Panc1 (cell line): ENCODE measurements at regions of chr4 and their contacts with region 1.

Region 1: GRCh38 chr4:24588216-24588954 is 4.0 kb upstream of the DHX15 start:
- DNase-seq: no peak
- ATAC-seq: no peak
- H3K4me3 ChIP-seq: no peak overlapping the region
- H3K27ac ChIP-seq: no peak overlapping the region
- H3K4me1 ChIP-seq: no peaks in the 10 kb centered on the region; the same call in 1 of the 2 replicates
- H3K27me3 ChIP-seq: no peaks in the 10 kb centered on the region
- CTCF ChIP-seq: no peak

Region 2: DNA sequence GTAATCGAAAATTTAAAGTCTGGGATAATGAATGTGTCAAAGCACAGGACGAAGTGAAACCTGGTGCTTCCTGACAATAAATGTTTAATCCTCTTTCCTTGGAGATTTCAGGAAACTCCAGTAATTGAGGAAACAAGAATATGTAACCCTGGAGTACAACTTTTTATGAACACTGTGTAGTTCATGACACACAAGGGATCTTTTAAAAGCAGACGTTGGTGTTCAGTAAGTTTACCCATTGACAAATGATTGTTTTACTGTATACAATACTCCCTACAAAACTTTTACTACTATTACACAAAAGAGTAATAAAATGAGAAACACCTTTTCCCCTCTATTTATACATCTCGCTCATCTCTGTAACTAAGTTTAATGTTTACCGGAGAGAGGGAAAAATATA is 1011.0 kb before region 1 on chr4:
- CTCF ChIA-PET with region 1: no interaction called
- POLR2A ChIA-PET with region 1: no interaction called
- in situ Hi-C with region 1: no loop called
- intact Hi-C with region 1: no loop called
- DNase-seq: no peak
- ATAC-seq: no peak
- H3K4me3 ChIP-seq: no peak overlapping the region
- H3K27ac ChIP-seq: no peak overlapping the region
- H3K4me1 ChIP-seq: no peaks in the 10 kb centered on the region
- H3K27me3 ChIP-seq: no peaks in the 10 kb centered on the region
- CTCF ChIP-seq: no peak

Region 3: DNA sequence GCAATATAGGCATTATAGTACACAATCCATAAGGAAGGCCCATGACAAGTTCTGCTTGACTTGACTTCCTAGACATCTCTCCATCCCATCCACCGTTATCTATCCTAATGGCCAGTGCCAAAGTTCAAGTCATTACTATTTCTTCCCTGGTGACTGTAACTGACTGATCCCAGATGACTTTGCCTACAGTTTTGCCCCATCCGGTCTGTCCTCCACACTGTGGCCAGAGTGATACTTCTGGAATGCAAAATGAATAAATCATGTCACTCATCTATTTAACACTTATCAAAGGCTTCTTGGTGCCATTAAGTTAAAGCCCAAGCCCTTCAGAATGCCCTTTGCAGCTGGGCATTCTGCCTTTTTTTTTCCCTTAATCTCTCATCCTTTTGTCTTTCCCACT is 829.3 kb before region 1 on chr4:
- CTCF ChIA-PET with region 1: no interaction called
- POLR2A ChIA-PET with region 1: no interaction called
- in situ Hi-C with region 1: no loop called
- intact Hi-C with region 1: no loop called
- DNase-seq: no peak
- ATAC-seq: no peak
- H3K4me3 ChIP-seq: no peak overlapping the region
- H3K27ac ChIP-seq: no peak overlapping the region
- H3K4me1 ChIP-seq: no peaks in the 10 kb centered on the region
- H3K27me3 ChIP-seq: no peaks in the 10 kb centered on the region
- CTCF ChIP-seq: no peak

Region 4: GRCh38 chr4:24862073-24862751 is 273.8 kb after region 1 on chr4:
- CTCF ChIA-PET with region 1: interaction called, 13 read pairs
- POLR2A ChIA-PET with region 1: no interaction called
- in situ Hi-C with region 1: no loop called
- intact Hi-C with region 1: no loop called
- DNase-seq: no peak
- ATAC-seq: no peak
- H3K4me3 ChIP-seq: no peak overlapping the region
- H3K27ac ChIP-seq: no peak overlapping the region
- H3K4me1 ChIP-seq: no peaks in the 10 kb centered on the region
- H3K27me3 ChIP-seq: no peaks in the 10 kb centered on the region
- CTCF ChIP-seq: no peak